Tibial artery (tissue), 4 donors: ENCODE measurements at regions of chr9 and their contacts with region 1.

Region 1: GRCh38 chr9:134314950-134315715 is 11.1 kb upstream of the RXRA start:
- DNase-seq: peak in 1 of 2 donors; percentile 58
- H3K4me3 ChIP-seq: no peak overlapping the region
- H3K27ac ChIP-seq: no peak overlapping the region
- H3K4me1 ChIP-seq: peaks cover 0 to 18% (median 8%) of the 10 kb centered on the region in 4 donors
- H3K27me3 ChIP-seq: peaks cover 0 to 10% of the 10 kb centered on the region in 2 donors
- CTCF ChIP-seq: no peak

Region 2: GRCh38 chr9:134263596-134263995 is 51.5 kb before region 1 on chr9:
- intact Hi-C with region 1: loop called (anchors 5 kb)
- DNase-seq: no peak
- H3K4me3 ChIP-seq: no peak overlapping the region
- H3K27ac ChIP-seq: no peak overlapping the region
- H3K4me1 ChIP-seq: peaks cover 0 to 6% (median 0%) of the 10 kb centered on the region in 4 donors
- H3K27me3 ChIP-seq: peaks cover 0 to 50% of the 10 kb centered on the region in 2 donors
- CTCF ChIP-seq: no peak